Naive thymus-derived CD4-positive, alpha-beta T cell (primary cell): ENCODE measurements at regions of chr4 and their contacts with region 1.

Region 1: DNA sequence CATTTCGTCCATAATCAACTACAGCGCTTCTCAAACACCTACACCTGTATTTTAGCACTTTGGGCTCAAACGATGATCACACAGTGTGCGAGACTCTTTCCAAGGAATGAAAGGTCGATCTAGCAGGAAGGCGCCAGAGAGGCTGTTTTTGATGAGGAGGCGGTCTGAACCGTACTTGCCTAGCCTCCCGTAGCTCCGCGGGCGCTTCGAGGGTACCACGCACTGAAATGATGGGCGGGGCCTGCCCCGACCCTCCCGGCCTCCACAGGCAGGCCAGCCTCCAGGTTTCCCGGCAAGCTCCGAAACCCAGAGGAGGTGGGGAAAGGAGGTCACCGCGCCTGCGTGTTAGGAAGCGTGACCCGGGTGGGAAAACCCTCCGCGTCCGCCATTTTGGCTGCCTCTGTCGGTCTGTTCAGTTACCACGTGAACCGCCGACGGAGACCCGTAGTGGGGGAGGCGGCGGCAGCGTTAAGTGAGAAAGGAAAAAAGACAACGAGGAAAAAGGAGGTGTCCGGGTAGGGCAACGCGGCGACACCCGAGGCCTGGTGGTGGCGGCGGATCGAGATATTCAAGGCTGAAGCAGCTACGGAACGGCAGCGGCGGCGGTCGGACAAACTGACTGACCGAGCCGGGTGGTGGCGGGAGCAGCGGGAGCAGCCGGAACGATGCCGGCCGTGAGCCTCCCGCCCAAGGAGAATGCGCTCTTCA is at the start of gene NAA15:
- DNase-seq: peak; percentile 88 to 99 (median 97)
- ATAC-seq: peak; percentile 95
- H3K4me3 ChIP-seq: peak within 1 kb of the TSS; percentile 83
- H3K4me3 Mint-ChIP-seq: peak within 1 kb of the TSS; percentile 96 to 100 (median 100)
- H3K27ac ChIP-seq: peak within 1 kb of the TSS; percentile 92
- H3K27ac Mint-ChIP-seq: peak within 1 kb of the TSS; percentile 97 to 100 (median 99)
- H3K4me1 ChIP-seq: peaks cover 22 to 28% of the 10 kb centered on the region in 2 donors
- H3K4me1 Mint-ChIP-seq: peaks cover 17 to 76% (median 58%) of the 10 kb centered on the region in 7 donors
- H3K27me3 ChIP-seq: no peaks in the 10 kb centered on the region
- H3K27me3 Mint-ChIP-seq: no peaks in the 10 kb centered on the region
- total RNA-seq, gene NAA15: 41.2 to 67.4 (median 49.0) TPM

Region 2: DNA sequence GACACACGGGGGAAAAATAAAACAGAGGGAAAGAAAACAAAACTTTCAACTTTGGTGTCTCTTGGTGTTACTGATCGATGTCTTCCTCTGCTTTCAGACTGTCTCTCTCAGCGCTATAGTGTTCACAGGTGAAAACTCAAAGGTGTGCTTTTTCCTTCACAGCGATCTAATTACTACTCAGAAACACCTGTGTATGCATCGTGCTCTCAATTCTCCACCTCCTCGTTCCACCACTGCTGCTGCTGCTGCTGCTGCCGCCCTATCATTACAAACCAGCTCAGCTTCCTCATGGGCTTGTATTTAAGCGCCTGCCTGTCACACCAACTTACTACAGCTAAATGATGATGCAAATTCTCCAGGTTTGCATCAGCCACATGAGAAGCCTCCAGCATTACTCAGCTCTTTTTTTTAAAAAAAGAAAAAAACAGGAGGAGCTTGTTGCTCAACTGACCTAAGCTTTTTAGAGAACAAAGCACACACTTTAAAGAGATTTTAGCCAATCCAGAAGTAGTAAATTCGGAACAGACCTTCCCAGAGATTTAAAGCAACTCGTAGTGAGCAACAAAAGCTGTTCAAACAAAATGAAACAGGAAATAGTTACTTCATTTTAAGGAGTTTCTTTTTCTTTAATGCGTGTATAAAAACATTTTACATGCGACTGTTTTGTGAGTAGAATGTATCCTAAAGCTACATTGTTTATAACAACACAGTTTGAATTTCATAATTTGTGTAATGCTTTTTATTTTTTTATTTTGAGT is 1059.0 kb before region 1 on chr4 and contains the start of gene SLC7A11:
- CTCF ChIA-PET with region 1: no interaction called
- POLR2A ChIA-PET with region 1: no interaction called
- intact Hi-C with region 1: loop called in 1 of 2 experiments (anchors 5 kb)
- DNase-seq: peak in 8 of 9 donors; percentile 13 to 61 (median 42)
- ATAC-seq: peak; percentile 94
- H3K4me3 ChIP-seq: peak within 1 kb of the TSS; percentile 35
- H3K4me3 Mint-ChIP-seq: peak within 1 kb of the TSS; percentile 70 to 97 (median 83)
- H3K27ac ChIP-seq: no peak within 1 kb of the TSS
- H3K27ac Mint-ChIP-seq: peak within 1 kb of the TSS; percentile 9 to 96 (median 64)
- H3K4me1 ChIP-seq: peaks cover 0 to 3% of the 10 kb centered on the region in 2 donors
- H3K4me1 Mint-ChIP-seq: peaks cover 0 to 36% (median 21%) of the 10 kb centered on the region in 7 donors
- H3K27me3 ChIP-seq: no peaks in the 10 kb centered on the region
- H3K27me3 Mint-ChIP-seq: no peaks in the 10 kb centered on the region
- total RNA-seq, gene SLC7A11: 0.21 to 2.8 (median 0.54) TPM

Region 3: DNA sequence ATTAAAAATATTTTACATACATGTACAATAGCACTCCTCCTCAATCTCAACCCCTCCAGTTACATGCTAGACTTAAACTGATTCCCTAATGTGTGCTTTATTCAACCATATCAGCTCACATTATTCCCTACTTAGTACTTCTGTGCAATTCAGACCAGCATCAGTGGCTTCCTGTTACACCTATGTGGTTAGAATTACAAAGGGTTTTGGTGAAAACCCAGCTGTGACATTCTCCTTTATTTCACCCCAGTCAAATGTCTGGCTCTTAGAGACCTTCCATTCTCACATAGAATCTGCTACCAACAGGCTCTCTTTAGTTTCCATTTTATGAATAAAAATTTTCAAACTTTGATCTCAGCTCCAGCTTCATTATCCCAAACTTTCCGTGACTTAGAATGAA is 973.9 kb before region 1 on chr4:
- CTCF ChIA-PET with region 1: no interaction called
- POLR2A ChIA-PET with region 1: no interaction called
- intact Hi-C with region 1: no loop called
- DNase-seq: no peak
- ATAC-seq: no peak
- H3K4me3 ChIP-seq: no peak overlapping the region
- H3K4me3 Mint-ChIP-seq: no peak overlapping the region
- H3K27ac ChIP-seq: no peak overlapping the region
- H3K27ac Mint-ChIP-seq: peak overlapping the region in 1 of 9 donors; percentile 39
- H3K4me1 ChIP-seq: no peaks in the 10 kb centered on the region
- H3K4me1 Mint-ChIP-seq: peaks cover 0 to 6% (median 0%) of the 10 kb centered on the region in 7 donors
- H3K27me3 ChIP-seq: no peaks in the 10 kb centered on the region
- H3K27me3 Mint-ChIP-seq: peaks cover 0 to 6% (median 0%) of the 10 kb centered on the region in 5 donors

Region 4: DNA sequence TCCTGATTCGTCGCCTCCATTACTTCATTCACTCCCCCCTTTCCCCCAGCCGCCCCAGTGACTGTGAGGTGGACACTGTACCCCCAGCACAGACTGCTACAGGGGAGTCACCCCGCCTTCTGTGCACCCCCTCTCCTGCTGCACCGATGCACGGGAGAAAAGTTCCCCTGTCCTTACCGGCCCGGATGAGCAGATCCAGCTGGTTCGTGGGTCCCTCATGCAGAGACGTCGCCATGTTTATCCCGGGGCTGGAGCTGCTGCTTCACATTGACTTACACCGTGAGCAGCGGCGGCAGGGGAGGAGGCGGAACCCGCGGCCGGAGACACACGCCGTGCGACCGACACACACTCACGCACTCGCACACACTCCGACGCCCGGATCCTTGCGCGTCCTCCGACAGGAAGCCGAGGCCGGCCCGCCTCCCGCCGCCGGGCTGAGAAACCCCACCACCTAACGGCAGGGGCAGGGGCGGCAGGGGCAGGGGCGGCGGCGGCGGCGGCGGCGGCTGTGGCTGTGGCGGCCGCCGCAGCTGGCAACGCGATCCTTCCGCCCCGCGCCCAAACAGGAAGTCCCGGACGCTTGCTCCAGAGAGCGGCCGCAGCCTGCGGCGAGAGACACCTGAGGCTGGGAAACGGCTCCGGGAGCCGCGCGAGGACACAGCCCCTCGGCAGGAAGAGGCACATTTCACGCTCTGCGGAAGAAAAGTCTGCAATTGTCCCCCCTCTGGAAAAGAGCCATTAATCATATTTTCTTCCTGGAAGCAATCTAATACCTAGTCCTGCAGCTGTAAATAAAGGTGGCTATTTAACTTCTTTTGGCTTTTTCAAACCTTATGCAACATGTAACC is 217.1 kb before region 1 on chr4:
- CTCF ChIA-PET with region 1: interaction called, 6 read pairs
- POLR2A ChIA-PET with region 1: interaction called, 36 read pairs
- intact Hi-C with region 1: loop called (anchors 1 kb)
- DNase-seq: peak; percentile 54 to 88 (median 84)
- ATAC-seq: peak; percentile 64
- H3K4me3 ChIP-seq: peak overlapping the region; percentile 99
- H3K4me3 Mint-ChIP-seq: peak overlapping the region; percentile 90 to 100 (median 92)
- H3K27ac ChIP-seq: peak overlapping the region; percentile 96
- H3K27ac Mint-ChIP-seq: peak overlapping the region; percentile 85 to 100 (median 96)
- H3K4me1 ChIP-seq: peaks cover 16 to 27% of the 10 kb centered on the region in 2 donors
- H3K4me1 Mint-ChIP-seq: peaks cover 16 to 49% (median 41%) of the 10 kb centered on the region in 7 donors
- H3K27me3 ChIP-seq: no peaks in the 10 kb centered on the region
- H3K27me3 Mint-ChIP-seq: no peaks in the 10 kb centered on the region

Region 5: DNA sequence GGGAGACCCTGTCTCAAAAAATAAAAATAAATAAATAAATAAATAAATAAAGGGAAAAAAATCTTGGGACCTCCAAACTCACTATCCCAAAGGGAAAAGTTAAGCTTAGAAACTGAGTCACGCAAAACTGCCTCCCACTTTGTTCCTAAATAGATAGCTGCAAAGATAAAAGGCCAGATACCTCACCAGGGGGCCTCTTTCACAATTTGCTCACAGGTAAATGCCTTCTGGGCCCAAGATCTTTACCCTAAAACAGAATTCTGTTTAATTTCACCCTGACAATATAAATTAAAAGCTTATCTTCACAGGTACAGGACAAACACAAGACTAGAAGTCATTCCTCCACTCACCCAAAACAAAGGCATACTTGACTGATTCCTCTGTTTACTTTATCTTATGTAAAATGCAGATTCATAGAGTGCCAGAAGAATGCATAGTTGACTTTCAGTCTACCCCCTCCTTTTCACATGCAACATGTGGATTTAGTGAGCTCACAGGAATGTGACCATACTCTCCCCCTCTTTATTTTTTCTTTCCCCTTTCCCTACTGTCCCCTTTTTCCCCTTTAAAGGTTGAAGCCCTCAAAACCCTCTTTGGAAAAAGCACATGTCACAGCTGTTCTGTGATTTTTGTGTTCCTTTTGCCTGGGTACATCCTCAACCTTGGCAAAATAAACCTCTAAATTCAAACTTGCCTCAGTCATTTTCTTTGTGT is 147.7 kb before region 1 on chr4:
- CTCF ChIA-PET with region 1: no interaction called
- POLR2A ChIA-PET with region 1: no interaction called
- intact Hi-C with region 1: no loop called
- DNase-seq: no peak
- ATAC-seq: no peak
- H3K4me3 ChIP-seq: no peak overlapping the region
- H3K4me3 Mint-ChIP-seq: no peak overlapping the region
- H3K27ac ChIP-seq: no peak overlapping the region
- H3K27ac Mint-ChIP-seq: peak overlapping the region in 2 of 9 donors; percentile 29 to 59
- H3K4me1 ChIP-seq: no peaks in the 10 kb centered on the region
- H3K4me1 Mint-ChIP-seq: peaks cover 4 to 12% (median 7%) of the 10 kb centered on the region in 7 donors
- H3K27me3 ChIP-seq: no peaks in the 10 kb centered on the region
- H3K27me3 Mint-ChIP-seq: peaks cover 0 to 7% (median 0%) of the 10 kb centered on the region in 5 donors

Region 6: DNA sequence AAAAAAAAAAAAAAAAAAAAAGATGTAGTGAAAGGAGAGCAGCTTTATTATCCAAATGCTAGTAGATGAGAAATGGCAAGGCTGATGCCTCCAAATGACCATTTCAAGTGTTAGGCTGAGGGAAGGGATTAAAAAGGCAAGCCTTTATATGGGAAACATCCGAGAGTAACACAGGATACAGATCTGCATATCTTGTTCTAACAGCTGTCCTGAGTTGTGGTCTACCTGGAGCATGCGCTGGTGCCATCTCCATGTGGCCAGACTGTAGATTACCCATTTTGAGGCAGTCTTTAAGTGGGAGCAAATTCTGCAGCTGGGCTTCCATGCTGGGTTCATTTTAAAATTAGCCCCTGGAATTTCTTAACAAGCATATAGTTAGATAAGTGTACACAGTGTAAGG is 98.3 kb before region 1 on chr4:
- CTCF ChIA-PET with region 1: no interaction called
- POLR2A ChIA-PET with region 1: no interaction called
- intact Hi-C with region 1: no loop called
- DNase-seq: no peak
- ATAC-seq: no peak
- H3K4me3 ChIP-seq: no peak overlapping the region
- H3K4me3 Mint-ChIP-seq: no peak overlapping the region
- H3K27ac ChIP-seq: no peak overlapping the region
- H3K27ac Mint-ChIP-seq: no peak overlapping the region
- H3K4me1 ChIP-seq: no peaks in the 10 kb centered on the region
- H3K4me1 Mint-ChIP-seq: peaks cover 0 to 3% (median 0%) of the 10 kb centered on the region in 7 donors
- H3K27me3 ChIP-seq: peaks cover 0 to 2% of the 10 kb centered on the region in 2 donors
- H3K27me3 Mint-ChIP-seq: peaks cover 0 to 36% (median 5%) of the 10 kb centered on the region in 5 donors

Region 7: GRCh38 chr4:139315221-139315675 is 14.0 kb after region 1 on chr4:
- CTCF ChIA-PET with region 1: interaction called, 3 read pairs
- POLR2A ChIA-PET with region 1: interaction called, 6 read pairs
- intact Hi-C with region 1: loop called (anchors 1 kb)
- DNase-seq: no peak
- ATAC-seq: no peak
- H3K4me3 ChIP-seq: no peak overlapping the region
- H3K4me3 Mint-ChIP-seq: peak overlapping the region in 9 of 10 donors; percentile 7 to 78 (median 43)
- H3K27ac ChIP-seq: no peak overlapping the region
- H3K27ac Mint-ChIP-seq: peak overlapping the region in 6 of 9 donors; percentile 13 to 88 (median 66)
- H3K4me1 ChIP-seq: peaks cover 21 to 26% of the 10 kb centered on the region in 2 donors
- H3K4me1 Mint-ChIP-seq: peaks cover 65 to 84% (median 81%) of the 10 kb centered on the region in 7 donors
- H3K27me3 ChIP-seq: no peaks in the 10 kb centered on the region
- H3K27me3 Mint-ChIP-seq: no peaks in the 10 kb centered on the region

Region 8: GRCh38 chr4:139361301-139361700 is 60.0 kb after region 1 on chr4:
- CTCF ChIA-PET with region 1: no interaction called
- POLR2A ChIA-PET with region 1: interaction called, 3 read pairs
- intact Hi-C with region 1: loop called in 1 of 2 experiments (anchors 10 kb)
- DNase-seq: no peak
- ATAC-seq: no peak
- H3K4me3 ChIP-seq: no peak overlapping the region
- H3K4me3 Mint-ChIP-seq: no peak overlapping the region
- H3K27ac ChIP-seq: no peak overlapping the region
- H3K27ac Mint-ChIP-seq: no peak overlapping the region
- H3K4me1 ChIP-seq: no peaks in the 10 kb centered on the region
- H3K4me1 Mint-ChIP-seq: peaks cover 0 to 5% (median 0%) of the 10 kb centered on the region in 7 donors
- H3K27me3 ChIP-seq: no peaks in the 10 kb centered on the region
- H3K27me3 Mint-ChIP-seq: no peaks in the 10 kb centered on the region

Region 9: GRCh38 chr4:141220655-141221605 is 1919.7 kb after region 1 on chr4 and contains the start of gene ZNF330:
- CTCF ChIA-PET with region 1: no interaction called
- POLR2A ChIA-PET with region 1: no interaction called
- intact Hi-C with region 1: loop called in 1 of 2 experiments (anchors 10 kb)
- DNase-seq: peak; percentile 80 to 97 (median 90)
- ATAC-seq: peak; percentile 97
- H3K4me3 ChIP-seq: peak within 1 kb of the TSS; percentile 94
- H3K4me3 Mint-ChIP-seq: peak within 1 kb of the TSS; percentile 91 to 99 (median 94)
- H3K27ac ChIP-seq: peak within 1 kb of the TSS; percentile 93
- H3K27ac Mint-ChIP-seq: peak within 1 kb of the TSS; percentile 91 to 97 (median 96)
- H3K4me1 ChIP-seq: peaks cover 9 to 13% of the 10 kb centered on the region in 2 donors
- H3K4me1 Mint-ChIP-seq: peaks cover 24 to 58% (median 52%) of the 10 kb centered on the region in 7 donors
- H3K27me3 ChIP-seq: no peaks in the 10 kb centered on the region
- H3K27me3 Mint-ChIP-seq: peaks cover 0 to 18% (median 6%) of the 10 kb centered on the region in 5 donors
- total RNA-seq, gene ZNF330: 31.7 to 44.7 (median 41.0) TPM